Naive thymus-derived CD4-positive, alpha-beta T cell (primary cell): ENCODE measurements at regions of chr2 and their contacts with region 1.

Region 1: GRCh38 chr2:171160119-171160955 is at the start of gene TLK1:
- DNase-seq: peak; percentile 63 to 84 (median 81)
- ATAC-seq: peak; percentile 78
- H3K4me3 ChIP-seq: peak within 1 kb of the TSS; percentile 70
- H3K4me3 Mint-ChIP-seq: peak within 1 kb of the TSS; percentile 87 to 98 (median 96)
- H3K27ac ChIP-seq: peak within 1 kb of the TSS; percentile 99
- H3K27ac Mint-ChIP-seq: peak within 1 kb of the TSS; percentile 88 to 98 (median 97)
- H3K4me1 ChIP-seq: peaks cover 30 to 39% of the 10 kb centered on the region in 2 donors
- H3K4me1 Mint-ChIP-seq: peaks cover 49 to 70% (median 58%) of the 10 kb centered on the region in 7 donors
- H3K27me3 ChIP-seq: no peaks in the 10 kb centered on the region
- H3K27me3 Mint-ChIP-seq: no peaks in the 10 kb centered on the region
- total RNA-seq, gene TLK1: 96.9 to 191 (median 141) TPM

Region 2: DNA sequence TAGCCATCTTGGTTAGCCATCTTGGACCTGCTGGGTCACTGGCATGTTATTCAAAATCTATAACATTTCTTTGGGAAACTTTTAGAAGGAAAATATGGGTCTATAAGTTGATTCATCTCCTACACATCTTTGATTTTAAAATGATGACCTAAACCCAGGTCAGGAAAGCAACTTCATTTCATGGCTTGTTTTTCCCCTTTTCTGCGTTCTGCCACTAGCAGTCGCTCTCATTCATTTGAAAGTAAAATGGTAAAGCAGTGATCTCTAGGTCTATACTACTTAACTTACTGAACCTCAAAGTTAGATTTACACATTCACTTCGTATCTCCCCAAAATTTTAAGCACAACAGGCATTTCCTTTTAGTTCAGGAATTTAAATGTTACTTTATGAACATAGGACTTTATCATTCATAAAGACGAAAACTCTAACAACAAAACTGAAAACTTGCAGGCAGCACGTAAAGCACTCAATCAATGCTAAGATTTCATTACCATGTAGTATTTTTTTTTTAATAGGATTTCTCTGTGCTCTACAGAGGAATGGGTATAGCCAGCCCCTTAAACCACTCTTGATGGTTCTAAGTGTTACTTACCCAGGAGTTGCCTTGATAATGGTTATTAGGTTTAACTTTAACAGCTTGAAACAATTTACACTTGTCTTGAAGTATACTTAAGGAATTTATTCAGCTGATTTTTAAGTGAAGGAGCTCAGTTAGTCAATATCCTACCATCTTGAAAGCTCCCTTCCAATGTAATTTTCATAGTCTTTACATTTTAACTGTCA is 168.7 kb before region 1 on chr2:
- CTCF ChIA-PET with region 1: interaction called, 6 read pairs
- POLR2A ChIA-PET with region 1: interaction called, 4 read pairs
- intact Hi-C with region 1: loop called in 1 of 2 experiments (anchors 5 kb)
- DNase-seq: no peak
- ATAC-seq: no peak
- H3K4me3 ChIP-seq: no peak overlapping the region
- H3K4me3 Mint-ChIP-seq: no peak overlapping the region
- H3K27ac ChIP-seq: no peak overlapping the region
- H3K27ac Mint-ChIP-seq: peak overlapping the region in 6 of 9 donors; percentile 15 to 63 (median 36)
- H3K4me1 ChIP-seq: no peaks in the 10 kb centered on the region
- H3K4me1 Mint-ChIP-seq: peaks cover 0 to 19% (median 10%) of the 10 kb centered on the region in 7 donors
- H3K27me3 ChIP-seq: no peaks in the 10 kb centered on the region
- H3K27me3 Mint-ChIP-seq: no peaks in the 10 kb centered on the region

Region 3: DNA sequence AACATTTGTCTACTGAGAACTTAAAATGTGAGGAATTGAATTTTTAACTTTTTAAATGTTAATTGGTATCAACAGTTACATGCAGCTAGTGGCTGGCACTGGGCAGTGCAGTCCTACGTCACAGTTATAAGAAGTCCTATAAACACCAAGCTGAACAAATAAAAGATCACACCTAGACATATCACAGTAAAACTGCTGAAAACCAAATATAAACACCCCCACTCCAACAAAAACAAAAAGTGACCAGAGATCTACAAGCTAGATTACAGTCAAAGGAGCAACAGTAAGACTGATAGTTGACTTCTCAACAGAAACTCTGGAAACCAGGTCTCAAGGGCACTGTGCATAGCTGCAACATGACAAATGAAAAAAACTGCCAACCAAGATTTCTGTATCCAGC is 19.0 kb before region 1 on chr2:
- CTCF ChIA-PET with region 1: interaction called, 5 read pairs
- POLR2A ChIA-PET with region 1: interaction called, 3 read pairs
- intact Hi-C with region 1: loop called in 1 of 2 experiments (anchors 1 kb)
- DNase-seq: no peak
- ATAC-seq: peak; percentile 31
- H3K4me3 ChIP-seq: no peak overlapping the region
- H3K4me3 Mint-ChIP-seq: peak overlapping the region in 7 of 10 donors; percentile 3 to 61 (median 27)
- H3K27ac ChIP-seq: no peak overlapping the region
- H3K27ac Mint-ChIP-seq: peak overlapping the region in 2 of 9 donors; percentile 1 to 86
- H3K4me1 ChIP-seq: peaks cover 9 to 20% of the 10 kb centered on the region in 2 donors
- H3K4me1 Mint-ChIP-seq: peaks cover 37 to 97% (median 75%) of the 10 kb centered on the region in 7 donors
- H3K27me3 ChIP-seq: no peaks in the 10 kb centered on the region
- H3K27me3 Mint-ChIP-seq: no peaks in the 10 kb centered on the region

Region 4: GRCh38 chr2:171244970-171245782 is 84.8 kb after region 1 on chr2:
- CTCF ChIA-PET with region 1: interaction called, 5 read pairs
- POLR2A ChIA-PET with region 1: interaction called, 3 read pairs
- intact Hi-C with region 1: loop called (anchors 1 kb)
- DNase-seq: no peak
- ATAC-seq: no peak
- H3K4me3 ChIP-seq: no peak overlapping the region
- H3K4me3 Mint-ChIP-seq: no peak overlapping the region
- H3K27ac ChIP-seq: no peak overlapping the region
- H3K27ac Mint-ChIP-seq: peak overlapping the region in 1 of 9 donors; percentile 38
- H3K4me1 ChIP-seq: peaks cover 19 to 24% of the 10 kb centered on the region in 2 donors
- H3K4me1 Mint-ChIP-seq: peaks cover 19 to 49% (median 46%) of the 10 kb centered on the region in 7 donors
- H3K27me3 ChIP-seq: no peaks in the 10 kb centered on the region
- H3K27me3 Mint-ChIP-seq: peaks cover 0 to 4% (median 0%) of the 10 kb centered on the region in 5 donors

Region 5: DNA sequence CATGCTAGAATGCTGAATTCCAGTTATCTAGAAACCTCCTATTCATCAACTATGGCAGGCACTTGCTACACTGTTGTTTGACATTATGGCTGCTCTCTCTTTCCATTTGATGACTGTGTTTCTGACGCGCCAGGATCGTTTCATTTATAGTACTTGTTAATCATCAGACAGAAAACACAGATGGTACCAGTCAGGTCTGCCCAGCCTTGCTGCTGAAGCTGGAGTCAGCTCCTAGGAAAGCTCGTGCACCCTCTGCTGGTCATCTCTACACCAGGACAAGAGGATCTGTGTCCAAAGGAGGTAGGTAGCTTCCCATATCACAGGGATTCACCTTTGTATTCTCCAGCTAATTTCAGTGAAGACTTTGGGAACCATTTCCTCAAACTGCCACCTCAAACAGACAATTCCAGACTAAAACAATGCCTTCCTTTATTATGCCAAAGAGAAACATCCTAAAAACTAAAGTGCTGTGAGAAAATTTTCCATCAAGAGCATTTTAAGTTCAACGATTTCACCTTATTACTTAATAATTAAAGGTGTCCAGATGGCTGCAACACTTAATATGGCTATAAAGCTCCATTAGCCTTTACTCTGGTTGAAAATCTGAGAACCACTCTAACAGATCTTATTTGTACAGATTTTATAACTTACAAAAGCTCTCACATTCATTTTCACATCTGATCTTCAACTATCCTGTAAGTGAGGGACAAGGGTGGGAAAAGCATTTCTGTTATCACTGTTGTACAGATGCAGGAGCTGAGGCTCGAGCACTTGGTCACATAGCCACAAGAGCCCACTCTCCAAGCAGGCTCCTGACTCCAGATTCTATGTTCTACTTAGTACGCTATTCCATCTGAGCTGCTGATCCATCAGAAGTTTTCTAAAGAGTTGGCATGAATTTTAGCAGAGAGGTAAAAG is 255.9 kb after region 1 on chr2:
- CTCF ChIA-PET with region 1: interaction called, 8 read pairs
- POLR2A ChIA-PET with region 1: interaction called, 7 read pairs
- intact Hi-C with region 1: loop called (anchors 1 kb)
- DNase-seq: peak; percentile 29 to 82 (median 75)
- ATAC-seq: peak; percentile 99
- H3K4me3 ChIP-seq: no peak overlapping the region
- H3K4me3 Mint-ChIP-seq: no peak overlapping the region
- H3K27ac ChIP-seq: no peak overlapping the region
- H3K27ac Mint-ChIP-seq: peak overlapping the region; percentile 4 to 74 (median 55)
- H3K4me1 ChIP-seq: no peaks in the 10 kb centered on the region
- H3K4me1 Mint-ChIP-seq: peaks cover 6 to 22% (median 7%) of the 10 kb centered on the region in 7 donors
- H3K27me3 ChIP-seq: no peaks in the 10 kb centered on the region
- H3K27me3 Mint-ChIP-seq: no peaks in the 10 kb centered on the region